Breast epithelium (tissue), 4 donors: ENCODE measurements at regions of chr10 and their contacts with region 1.

Region 1: DNA sequence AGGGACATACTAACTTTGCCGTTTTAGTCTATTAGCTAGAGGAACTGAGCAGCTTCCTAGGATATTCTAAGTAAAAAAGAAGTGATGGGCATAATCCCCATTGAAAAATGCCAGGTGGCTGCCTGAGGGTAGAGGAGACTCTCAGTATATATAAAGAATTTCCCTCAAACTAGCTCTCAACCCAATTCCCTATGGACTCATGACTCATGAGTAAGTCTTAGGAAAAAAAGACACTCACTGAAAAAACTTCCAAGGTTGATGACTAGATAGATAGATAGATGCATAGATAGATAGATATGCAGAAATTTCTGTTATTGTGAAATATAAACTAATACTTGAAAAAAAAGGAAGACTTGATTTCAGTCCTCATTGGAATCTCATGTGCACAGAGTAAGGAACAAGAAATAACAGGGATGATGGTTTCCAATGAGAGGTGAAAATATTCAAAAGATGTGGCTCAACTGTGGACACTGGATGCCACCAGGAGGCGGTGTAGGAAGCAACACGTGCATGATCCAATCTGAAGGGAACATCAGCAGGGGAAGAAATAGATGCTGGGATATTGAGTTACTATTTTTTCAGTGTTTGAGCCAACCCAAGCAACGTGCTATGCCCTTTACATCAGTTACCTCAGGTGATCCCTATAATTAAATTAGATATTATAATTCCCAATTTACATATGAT is 711.0 kb upstream of the LRRTM3 start:
- DNase-seq: no peak
- H3K4me3 ChIP-seq: no peak overlapping the region
- H3K27ac ChIP-seq: no peak overlapping the region
- H3K4me1 ChIP-seq: no peaks in the 10 kb centered on the region
- H3K27me3 ChIP-seq: no peaks in the 10 kb centered on the region
- CTCF ChIP-seq: no peak
- POLR2A ChIP-seq: no peak

Region 2: DNA sequence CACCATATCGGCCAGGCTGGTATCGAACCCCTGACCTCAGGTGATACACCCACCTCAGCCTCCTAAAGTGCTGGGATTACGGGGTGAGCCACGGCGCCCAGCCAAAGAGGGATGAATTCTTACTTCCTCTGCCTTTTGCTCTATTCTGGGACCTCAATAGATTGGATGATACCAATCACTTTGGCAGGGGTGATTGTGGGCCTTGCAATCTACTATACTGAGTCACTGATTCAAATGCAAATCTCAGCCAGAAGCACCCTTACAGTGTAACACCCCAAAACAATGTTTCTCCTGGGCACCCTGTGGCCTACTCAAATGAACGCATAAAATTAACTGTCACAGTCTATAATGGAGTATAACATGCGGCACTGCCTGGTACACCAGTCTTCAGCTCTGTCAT is 114.3 kb after region 1 on chr10:
- intact Hi-C with region 1: loop called (anchors 5 kb)
- DNase-seq: no peak
- H3K4me3 ChIP-seq: no peak overlapping the region
- H3K27ac ChIP-seq: no peak overlapping the region
- H3K4me1 ChIP-seq: no peaks in the 10 kb centered on the region
- H3K27me3 ChIP-seq: no peaks in the 10 kb centered on the region
- CTCF ChIP-seq: no peak
- POLR2A ChIP-seq: no peak